MCF 10A (cell line): ENCODE measurements at regions of chrX and their contacts with region 1.

Region 1: GRCh38 chrX:82218361-82218760 is 1016.5 kb downstream of the SH3BGRL start:
- DNase-seq: peak; percentile 61
- H3K4me3 Mint-ChIP-seq: no peak overlapping the region
- H3K27ac Mint-ChIP-seq: no peak overlapping the region
- H3K4me1 Mint-ChIP-seq: peaks cover 11% of the 10 kb centered on the region
- H3K27me3 Mint-ChIP-seq: peaks cover 18% of the 10 kb centered on the region
- CTCF ChIP-seq: peak; percentile 60

Region 2: DNA sequence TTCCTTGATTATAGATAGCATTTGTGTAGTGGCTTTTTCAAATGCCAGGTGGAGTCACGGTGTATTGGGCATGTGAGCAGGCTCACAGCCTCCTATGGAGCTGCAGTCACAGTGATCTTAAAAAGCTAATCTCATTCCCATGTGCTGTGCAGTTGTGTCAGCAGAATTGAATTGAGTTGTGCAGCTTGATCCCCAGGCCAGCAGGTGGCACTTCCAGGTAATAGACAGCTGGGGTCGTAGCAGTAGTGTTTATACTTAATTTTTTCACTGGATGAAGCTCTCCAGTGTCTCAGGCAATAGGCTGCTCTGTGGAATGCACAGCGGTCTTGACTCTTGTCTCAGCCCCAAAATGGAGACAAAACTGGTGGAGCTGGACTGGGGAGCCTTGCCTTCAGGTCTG is 11.6 kb after region 1 on chrX:
- CTCF ChIA-PET with region 1: interaction called, 14 read pairs
- POLR2A ChIA-PET with region 1: no interaction called
- intact Hi-C with region 1: no loop called
- DNase-seq: no peak
- H3K4me3 Mint-ChIP-seq: no peak overlapping the region
- H3K27ac Mint-ChIP-seq: no peak overlapping the region
- H3K4me1 Mint-ChIP-seq: no peaks in the 10 kb centered on the region
- H3K27me3 Mint-ChIP-seq: no peaks in the 10 kb centered on the region
- CTCF ChIP-seq: peak; percentile 11

Region 3: GRCh38 chrX:82292803-82293202 is 74.4 kb after region 1 on chrX:
- CTCF ChIA-PET with region 1: no interaction called
- POLR2A ChIA-PET with region 1: no interaction called
- intact Hi-C with region 1: no loop called
- DNase-seq: no peak
- H3K4me3 Mint-ChIP-seq: no peak overlapping the region
- H3K27ac Mint-ChIP-seq: no peak overlapping the region
- H3K4me1 Mint-ChIP-seq: no peaks in the 10 kb centered on the region
- H3K27me3 Mint-ChIP-seq: peaks cover 5% of the 10 kb centered on the region
- CTCF ChIP-seq: no peak

Region 4: GRCh38 chrX:82458207-82458754 is 239.9 kb after region 1 on chrX:
- CTCF ChIA-PET with region 1: no interaction called
- POLR2A ChIA-PET with region 1: no interaction called
- intact Hi-C with region 1: no loop called
- DNase-seq: no peak
- H3K4me3 Mint-ChIP-seq: no peak overlapping the region
- H3K27ac Mint-ChIP-seq: no peak overlapping the region
- H3K4me1 Mint-ChIP-seq: no peaks in the 10 kb centered on the region
- H3K27me3 Mint-ChIP-seq: no peaks in the 10 kb centered on the region
- CTCF ChIP-seq: no peak

Region 5: GRCh38 chrX:82676386-82676785 is 458.0 kb after region 1 on chrX:
- CTCF ChIA-PET with region 1: interaction called, 11 read pairs
- POLR2A ChIA-PET with region 1: no interaction called
- intact Hi-C with region 1: no loop called
- DNase-seq: peak; percentile 23
- H3K4me3 Mint-ChIP-seq: no peak overlapping the region
- H3K27ac Mint-ChIP-seq: peak overlapping the region; percentile 29
- H3K4me1 Mint-ChIP-seq: no peaks in the 10 kb centered on the region
- H3K27me3 Mint-ChIP-seq: no peaks in the 10 kb centered on the region
- CTCF ChIP-seq: peak; percentile 35